Ovary (tissue), 10 donors: ENCODE measurements at regions of chr11 and their contacts with region 1.

Region 1: DNA sequence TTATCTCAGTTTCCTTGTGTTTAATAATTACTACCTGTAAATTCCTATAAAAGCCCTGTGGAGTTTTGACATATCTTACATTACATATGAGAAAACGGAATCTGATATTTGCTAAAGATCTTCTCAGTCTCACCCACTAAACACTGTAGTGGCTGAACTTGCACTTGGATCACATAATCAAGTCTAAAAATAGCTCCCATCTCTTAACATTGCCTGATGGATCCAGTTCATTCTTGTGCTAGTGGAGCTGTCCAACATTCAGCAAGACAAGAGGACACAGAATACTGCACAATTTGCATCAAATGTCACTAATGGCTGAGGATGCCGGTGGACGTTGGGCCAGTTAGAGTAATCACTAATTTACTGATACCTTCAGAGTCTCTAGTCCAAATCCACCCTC is 569.9 kb upstream of the ANO5 start:
- DNase-seq: no peak
- H3K4me3 ChIP-seq: no peak overlapping the region
- H3K27ac ChIP-seq: no peak overlapping the region
- H3K4me1 ChIP-seq: no peaks in the 10 kb centered on the region
- H3K27me3 ChIP-seq: no peaks in the 10 kb centered on the region
- CTCF ChIP-seq: no peak
- EP300 ChIP-seq: no peak
- POLR2A ChIP-seq: no peak

Region 2: DNA sequence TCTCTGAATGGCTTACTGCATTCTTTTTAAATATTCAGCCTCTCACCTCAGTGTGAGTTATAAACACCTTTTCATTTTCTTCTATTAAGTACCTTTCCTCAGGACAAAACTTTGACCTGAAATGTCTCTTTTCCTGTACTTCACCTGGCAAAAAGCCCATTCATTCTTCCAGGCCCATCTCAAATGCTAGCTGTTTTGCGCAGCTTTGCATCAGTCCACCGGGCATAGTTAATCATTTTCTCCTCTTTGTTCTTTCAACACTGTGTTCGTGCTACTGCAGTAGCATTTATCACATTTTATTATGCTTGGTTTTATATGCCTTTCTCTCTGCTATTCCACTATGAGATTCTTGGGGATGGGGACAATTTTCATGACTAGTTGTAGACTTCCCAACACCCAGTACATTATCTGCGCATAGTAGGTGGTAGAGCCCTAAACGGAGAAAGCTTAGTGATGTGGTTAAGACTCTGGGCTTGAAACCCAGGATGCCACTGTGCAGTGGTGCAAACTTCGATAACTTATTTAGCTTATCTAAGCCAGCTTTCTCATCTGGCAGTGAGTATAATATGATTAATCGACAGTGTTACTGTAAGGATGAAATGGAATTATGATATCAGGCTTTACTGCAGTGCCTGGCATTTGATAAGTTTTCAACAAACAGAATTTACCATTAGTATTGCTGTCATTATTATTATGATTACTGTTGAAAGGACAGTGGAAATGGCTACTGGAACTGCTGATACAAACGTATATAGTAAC is 257.9 kb before region 1 on chr11:
- intact Hi-C with region 1: no loop called
- DNase-seq: no peak
- H3K4me3 ChIP-seq: no peak overlapping the region
- H3K27ac ChIP-seq: no peak overlapping the region
- H3K4me1 ChIP-seq: no peaks in the 10 kb centered on the region
- H3K27me3 ChIP-seq: no peaks in the 10 kb centered on the region
- CTCF ChIP-seq: no peak
- EP300 ChIP-seq: no peak
- POLR2A ChIP-seq: no peak

Region 3: GRCh38 chr11:21564833-21565682 is 57.9 kb before region 1 on chr11:
- intact Hi-C with region 1: loop called in 1 of 4 experiments (anchors 1 kb)
- DNase-seq: no peak
- H3K4me3 ChIP-seq: no peak overlapping the region
- H3K27ac ChIP-seq: no peak overlapping the region
- H3K4me1 ChIP-seq: no peaks in the 10 kb centered on the region
- H3K27me3 ChIP-seq: no peaks in the 10 kb centered on the region
- CTCF ChIP-seq: no peak
- EP300 ChIP-seq: no peak
- POLR2A ChIP-seq: no peak

Region 4: GRCh38 chr11:21675049-21675616 is 52.1 kb after region 1 on chr11:
- intact Hi-C with region 1: no loop called
- DNase-seq: no peak
- H3K4me3 ChIP-seq: no peak overlapping the region
- H3K27ac ChIP-seq: no peak overlapping the region
- H3K4me1 ChIP-seq: no peaks in the 10 kb centered on the region
- H3K27me3 ChIP-seq: no peaks in the 10 kb centered on the region
- CTCF ChIP-seq: no peak
- EP300 ChIP-seq: no peak
- POLR2A ChIP-seq: no peak